ENCODE measurements at regions of chr9 and their contacts with region 1.

Region 1: GRCh38 chr9:131334629-131335367 is 45.3 kb downstream of the PLPP7 start:
- DNase-seq: no peak
- H3K4me3 ChIP-seq: no peak overlapping the region
- H3K27ac ChIP-seq: no peak overlapping the region
- H3K4me1 ChIP-seq: no peaks in the 10 kb centered on the region
- H3K27me3 ChIP-seq: no peaks in the 10 kb centered on the region
- CTCF ChIP-seq: no peak

Region 2: DNA sequence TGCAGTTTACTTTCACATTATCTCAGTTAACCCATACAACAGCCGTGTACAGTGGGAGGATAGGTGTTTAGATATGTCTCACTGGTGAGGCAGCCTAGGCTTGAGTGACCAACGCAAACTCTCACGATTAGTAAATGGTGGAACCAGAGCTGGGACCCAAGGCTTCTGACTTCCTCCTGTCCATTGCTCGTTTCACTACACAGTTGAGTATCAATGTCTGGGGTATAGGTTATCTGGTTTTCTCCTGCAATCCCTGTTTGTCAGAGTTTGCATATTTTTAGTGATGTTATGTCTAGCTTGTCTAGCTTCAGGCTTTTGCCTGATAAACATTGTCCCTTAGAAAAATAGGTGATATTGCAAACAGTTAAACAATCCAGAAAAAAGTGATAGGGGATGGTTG is 146.8 kb before region 1 on chr9:
- CTCF ChIA-PET with region 1: no interaction called
- dilution Hi-C with region 1: no loop called
- in situ Hi-C with region 1: loop called in 1 of 2 experiments (anchors 5 kb)
- intact Hi-C with region 1: no loop called
- DNase-seq: no peak
- H3K4me3 ChIP-seq: no peak overlapping the region
- H3K27ac ChIP-seq: no peak overlapping the region
- H3K4me1 ChIP-seq: peaks cover 16% of the 10 kb centered on the region
- H3K27me3 ChIP-seq: no peaks in the 10 kb centered on the region
- CTCF ChIP-seq: no peak

Region 3: DNA sequence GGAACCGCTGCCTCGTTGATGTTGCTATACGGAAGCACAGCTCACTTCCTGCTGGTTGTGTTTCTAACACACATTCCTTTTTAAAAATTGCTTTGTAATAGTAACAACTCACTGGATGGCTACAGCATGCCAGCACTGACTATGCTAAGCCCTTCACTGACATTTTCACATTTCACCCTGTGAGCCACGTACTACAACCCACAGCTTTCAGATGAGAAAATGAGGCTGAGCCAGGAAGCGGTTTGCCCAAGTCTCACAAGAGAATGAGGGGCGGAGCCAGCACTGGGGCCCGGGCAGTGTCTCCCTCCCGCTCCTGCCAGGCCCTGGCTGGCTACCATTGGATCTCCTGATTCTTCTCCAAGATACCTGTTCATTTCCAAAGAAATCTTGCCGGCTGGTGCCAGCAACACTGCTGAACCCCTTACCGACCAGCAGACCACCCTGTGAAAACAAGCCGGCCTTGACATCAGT is 96.8 kb before region 1 on chr9:
- CTCF ChIA-PET with region 1: interaction called, 3 read pairs
- dilution Hi-C with region 1: no loop called
- in situ Hi-C with region 1: no loop called
- intact Hi-C with region 1: loop called (anchors 2 kb)
- DNase-seq: peak; percentile 48
- H3K4me3 ChIP-seq: peak overlapping the region in 1 of 3 experiments; percentile 6
- H3K27ac ChIP-seq: no peak overlapping the region
- H3K4me1 ChIP-seq: peaks cover 11% of the 10 kb centered on the region
- H3K27me3 ChIP-seq: no peaks in the 10 kb centered on the region
- CTCF ChIP-seq: no peak

Region 4: GRCh38 chr9:131366761-131367401 is 32.1 kb after region 1 on chr9:
- CTCF ChIA-PET with region 1: no interaction called
- dilution Hi-C with region 1: no loop called
- in situ Hi-C with region 1: no loop called
- intact Hi-C with region 1: no loop called
- DNase-seq: peak; percentile 41
- H3K4me3 ChIP-seq: no peak overlapping the region
- H3K27ac ChIP-seq: peak overlapping the region; percentile 23
- H3K4me1 ChIP-seq: peaks cover 9% of the 10 kb centered on the region
- H3K27me3 ChIP-seq: no peaks in the 10 kb centered on the region
- CTCF ChIP-seq: peak; percentile 26 to 31